ENCODE measurements at regions of chr1 and their contacts with region 1.

Region 1: DNA sequence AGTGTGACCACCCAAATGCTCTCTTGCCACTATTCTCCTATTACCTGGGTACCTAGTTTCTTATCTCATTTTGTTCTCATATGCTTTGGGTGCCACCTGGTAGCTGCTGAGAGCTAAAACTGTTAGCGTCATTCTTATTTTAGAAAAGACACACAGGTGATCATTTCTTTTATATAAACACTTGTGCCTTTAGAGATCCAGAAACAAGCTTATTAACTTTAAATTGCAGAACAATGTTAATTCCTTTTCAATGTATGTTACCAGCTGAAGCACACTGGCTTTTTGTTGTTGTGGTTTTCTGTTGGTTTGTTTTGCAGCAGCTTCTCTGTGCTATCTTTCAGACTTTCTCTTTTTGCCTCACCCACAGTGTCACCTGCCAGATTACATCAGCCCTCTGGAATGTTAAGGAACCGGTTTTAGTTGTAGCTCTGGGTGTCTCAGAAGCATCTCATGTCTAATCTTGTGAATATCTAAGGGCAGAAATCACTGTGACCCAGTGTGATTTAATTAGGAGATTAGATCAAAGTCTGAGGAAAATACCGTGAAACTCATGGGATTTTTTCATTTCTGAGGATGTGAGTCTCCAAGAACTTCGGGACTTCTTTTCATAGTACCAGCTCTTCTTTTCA is 43.4 kb upstream of the SLC19A2 start:
- DNase-seq: peak; percentile 61
- H3K4me3 Mint-ChIP-seq: peak overlapping the region; percentile 10
- H3K27ac Mint-ChIP-seq: peak overlapping the region; percentile 77
- H3K4me1 Mint-ChIP-seq: peaks cover 33% of the 10 kb centered on the region
- H3K27me3 Mint-ChIP-seq: no peaks in the 10 kb centered on the region
- CTCF ChIP-seq: no peak

Region 2: DNA sequence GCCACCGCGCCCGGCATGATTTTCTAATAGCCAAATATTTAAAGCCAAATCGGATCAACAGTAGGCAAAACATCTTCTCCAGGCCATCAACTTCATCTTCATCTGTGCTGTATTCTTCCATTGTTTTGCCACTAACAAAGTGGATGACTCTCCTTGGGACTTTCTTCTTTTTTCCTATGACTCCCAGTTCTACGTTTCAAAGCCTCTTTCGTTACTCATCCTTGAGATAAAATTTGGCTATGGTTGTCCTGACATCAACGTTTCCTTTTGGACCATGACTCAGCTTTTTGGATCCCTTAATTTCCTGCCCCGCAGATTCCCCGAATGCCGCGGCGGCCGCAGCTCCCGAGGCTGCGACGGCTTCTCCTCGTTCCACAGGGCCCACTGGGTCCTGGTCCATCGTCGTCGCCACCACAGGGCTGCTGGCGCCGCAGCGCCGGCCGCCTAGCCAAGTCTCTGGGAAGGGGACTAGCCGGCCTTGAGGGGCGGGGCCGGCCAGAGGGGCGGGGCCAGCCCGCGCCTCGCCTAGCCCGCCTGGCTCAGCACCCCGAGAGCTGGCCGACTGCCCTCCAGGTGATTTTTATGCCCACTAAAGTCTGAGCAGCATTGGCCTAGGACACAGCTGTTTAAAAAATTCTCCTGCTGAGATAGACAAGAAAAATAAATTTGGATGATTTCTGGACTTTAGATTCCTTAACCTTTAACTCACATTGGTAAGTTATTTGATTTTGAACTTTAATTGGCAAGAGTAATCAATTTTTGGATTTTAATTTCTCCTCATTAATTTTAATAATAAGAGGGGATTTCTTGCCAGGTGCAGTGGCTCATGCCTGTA is 1709.1 kb before region 1 on chr1:
- CTCF ChIA-PET with region 1: no interaction called
- POLR2A ChIA-PET with region 1: no interaction called
- intact Hi-C with region 1: no loop called
- DNase-seq: peak; percentile 90
- H3K4me3 Mint-ChIP-seq: peak overlapping the region; percentile 69
- H3K27ac Mint-ChIP-seq: peak overlapping the region; percentile 74
- H3K4me1 Mint-ChIP-seq: peaks cover 25% of the 10 kb centered on the region
- H3K27me3 Mint-ChIP-seq: no peaks in the 10 kb centered on the region
- CTCF ChIP-seq: no peak

Region 3: DNA sequence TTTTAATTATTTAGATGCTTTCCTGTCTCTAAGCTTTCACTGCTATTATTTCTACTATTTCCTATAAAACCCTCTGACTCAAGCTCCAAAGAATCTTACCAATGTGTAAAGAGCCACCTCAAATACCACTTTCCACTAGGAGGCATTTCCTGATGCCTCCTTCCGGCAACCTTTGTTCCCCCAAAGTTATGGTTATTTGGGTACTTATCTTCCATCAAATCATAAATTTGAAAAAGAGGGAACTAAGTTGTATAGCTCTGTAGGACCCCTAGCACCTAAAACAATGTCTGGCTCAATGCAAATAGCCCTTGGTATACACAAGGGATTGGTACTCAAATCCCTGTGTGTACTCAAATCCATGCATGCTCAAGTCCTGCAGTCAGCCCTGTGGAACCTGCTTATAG is 241.2 kb before region 1 on chr1:
- CTCF ChIA-PET with region 1: no interaction called
- POLR2A ChIA-PET with region 1: no interaction called
- intact Hi-C with region 1: no loop called
- DNase-seq: peak; percentile 18
- H3K4me3 Mint-ChIP-seq: no peak overlapping the region
- H3K27ac Mint-ChIP-seq: no peak overlapping the region
- H3K4me1 Mint-ChIP-seq: peaks cover 17% of the 10 kb centered on the region
- H3K27me3 Mint-ChIP-seq: no peaks in the 10 kb centered on the region
- CTCF ChIP-seq: no peak

Region 4: DNA sequence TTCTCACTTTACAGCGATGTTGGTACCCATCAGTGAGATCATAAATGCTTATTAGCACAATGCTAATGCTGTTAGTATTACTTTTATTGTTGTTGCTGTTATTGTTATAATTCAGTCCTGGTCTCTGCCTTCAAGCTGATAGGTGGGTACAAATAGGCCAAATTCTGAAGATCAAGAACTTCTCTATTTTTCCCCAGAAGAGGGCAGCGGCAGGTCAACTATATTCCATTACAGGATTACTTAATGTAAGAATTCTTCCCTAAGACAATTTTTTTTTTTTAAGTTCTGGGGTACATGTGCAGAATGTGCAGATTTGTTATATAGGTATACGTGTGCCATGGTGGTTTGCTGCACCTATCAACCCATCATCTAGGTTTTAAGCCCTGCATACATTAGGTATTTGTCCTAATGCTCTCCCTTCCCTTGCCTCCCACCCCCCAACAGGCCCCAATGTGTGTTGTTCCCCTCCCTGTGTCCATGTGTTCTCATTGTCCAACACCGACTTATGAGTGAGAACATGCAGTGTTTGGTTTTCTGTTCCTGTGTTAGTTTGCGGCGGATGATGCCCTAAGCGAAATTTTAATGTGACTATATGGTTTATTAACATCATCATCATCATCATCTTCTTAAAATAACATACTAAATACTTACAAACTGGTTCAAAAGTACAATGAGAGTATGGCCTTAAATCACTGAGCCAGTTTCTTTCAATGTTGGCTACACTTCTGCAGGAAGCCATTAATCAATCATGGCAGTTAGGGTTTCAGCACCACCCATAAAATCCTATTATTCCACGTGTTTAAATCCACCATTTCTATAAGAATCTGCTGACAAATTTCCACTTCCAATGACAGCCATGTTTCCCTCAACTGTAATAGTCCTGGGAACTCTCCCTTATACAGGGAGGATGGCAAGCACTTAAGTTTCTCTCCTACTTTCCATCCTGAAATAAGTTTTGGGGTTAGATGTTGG is 62.6 kb before region 1 on chr1:
- CTCF ChIA-PET with region 1: interaction called, 16 read pairs
- POLR2A ChIA-PET with region 1: no interaction called
- intact Hi-C with region 1: no loop called
- DNase-seq: peak; percentile 72
- H3K4me3 Mint-ChIP-seq: no peak overlapping the region
- H3K27ac Mint-ChIP-seq: no peak overlapping the region
- H3K4me1 Mint-ChIP-seq: peaks cover 8% of the 10 kb centered on the region
- H3K27me3 Mint-ChIP-seq: no peaks in the 10 kb centered on the region
- CTCF ChIP-seq: peak; percentile 65

Region 5: DNA sequence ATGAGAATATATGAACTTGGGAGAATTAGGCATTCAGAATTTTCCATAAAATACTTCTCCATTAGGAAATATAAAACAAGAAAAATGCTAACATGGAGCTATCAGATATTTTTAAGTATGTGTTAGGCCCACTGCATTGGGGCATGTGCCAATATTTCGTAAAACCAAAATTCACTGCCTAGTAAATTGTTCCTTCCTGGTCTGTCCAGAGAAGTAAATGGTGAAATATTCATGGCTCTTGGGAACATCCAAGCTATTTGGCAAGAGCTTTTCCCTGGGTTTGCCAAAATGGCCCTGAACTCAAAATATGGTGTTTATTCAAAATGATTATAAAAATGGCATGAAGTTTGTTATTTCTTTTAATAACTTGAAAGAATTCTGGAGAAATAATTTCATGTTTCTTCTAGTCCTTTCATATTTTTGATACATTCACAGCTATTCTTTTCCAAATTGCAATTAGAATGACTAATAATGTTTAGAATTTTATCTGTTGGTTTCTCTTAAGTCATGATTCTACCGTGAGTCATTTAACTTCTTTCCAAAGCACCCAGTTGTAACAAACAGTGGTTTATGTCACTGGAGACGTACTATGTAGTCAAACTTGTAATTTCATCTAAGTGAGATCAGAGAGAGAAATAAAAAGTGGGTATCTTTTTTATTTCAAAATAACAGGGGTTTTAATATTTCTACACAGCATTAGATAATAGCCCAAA is 17.7 kb before region 1 on chr1:
- CTCF ChIA-PET with region 1: interaction called, 6 read pairs
- POLR2A ChIA-PET with region 1: interaction called, 13 read pairs
- intact Hi-C with region 1: no loop called
- DNase-seq: peak; percentile 86
- H3K4me3 Mint-ChIP-seq: peak overlapping the region; percentile 5
- H3K27ac Mint-ChIP-seq: peak overlapping the region; percentile 86
- H3K4me1 Mint-ChIP-seq: peaks cover 62% of the 10 kb centered on the region
- H3K27me3 Mint-ChIP-seq: no peaks in the 10 kb centered on the region
- CTCF ChIP-seq: no peak